ENCODE measurements at regions of chr17 and their contacts with region 1.

Region 1: GRCh38 chr17:59186850-59187249 is 23.0 kb upstream of the SMG8 start:
- DNase-seq: no peak
- ATAC-seq: no peak
- H3K4me3 ChIP-seq: no peak overlapping the region
- H3K27ac ChIP-seq: no peak overlapping the region
- H3K4me1 ChIP-seq: no peaks in the 10 kb centered on the region
- H3K27me3 ChIP-seq: no peaks in the 10 kb centered on the region
- CTCF ChIP-seq: no peak

Region 2: GRCh38 chr17:59121850-59122480 is 64.9 kb before region 1 on chr17:
- CTCF ChIA-PET with region 1: no interaction called
- POLR2A ChIA-PET with region 1: interaction called, 13 read pairs
- intact Hi-C with region 1: no loop called
- DNase-seq: no peak
- ATAC-seq: no peak
- H3K4me3 ChIP-seq: no peak overlapping the region
- H3K27ac ChIP-seq: no peak overlapping the region
- H3K4me1 ChIP-seq: no peaks in the 10 kb centered on the region
- H3K27me3 ChIP-seq: no peaks in the 10 kb centered on the region
- CTCF ChIP-seq: no peak